Activated CD4-positive, alpha-beta memory T cell treated with anti-CD3 and anti-CD28 coated beads for 36 hours (primary cell): ENCODE measurements at regions of chr12 and their contacts with region 1.

Region 1: DNA sequence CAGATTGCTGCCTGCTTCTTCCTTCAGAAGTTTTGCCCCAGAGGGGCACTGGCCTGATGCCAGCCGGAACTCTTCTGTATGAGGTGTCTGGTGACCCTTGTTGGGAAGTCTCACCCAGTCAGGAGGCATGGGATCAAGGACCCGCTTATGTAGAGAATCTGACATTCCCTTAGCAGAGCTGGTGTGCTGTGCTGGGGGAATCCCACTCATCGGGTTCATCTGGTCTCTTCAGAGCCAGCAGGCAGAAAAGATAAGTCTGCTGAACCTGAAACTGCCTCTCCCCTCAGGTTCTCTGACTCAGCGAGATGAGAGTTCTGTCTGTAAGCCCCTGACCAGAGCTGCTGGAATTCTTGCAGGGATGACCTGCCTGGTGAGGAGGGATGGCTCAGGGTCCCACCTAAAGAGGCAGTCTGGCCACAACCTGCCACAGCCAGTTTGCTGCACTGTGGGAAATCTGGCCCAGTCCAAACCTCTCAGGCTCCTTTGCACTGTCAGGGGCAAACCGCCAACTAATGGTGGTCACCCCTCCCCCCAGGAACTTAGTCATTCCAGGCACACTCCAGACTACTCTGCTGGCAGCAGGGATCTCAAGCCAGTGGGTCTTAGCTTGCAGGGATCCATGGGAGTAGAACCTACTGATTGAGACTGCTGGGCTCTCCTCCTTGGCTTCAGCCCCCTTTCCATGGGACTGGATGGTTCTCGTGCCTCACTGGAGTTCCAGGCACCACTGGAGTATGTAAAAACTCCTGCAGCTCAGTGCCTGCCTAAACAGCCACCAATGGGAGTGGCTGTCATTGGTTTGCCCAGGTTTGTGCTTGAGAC is 4.1 kb downstream of the CLEC2D start:
- DNase-seq: peak; percentile 88
- H3K4me3 Mint-ChIP-seq: peak overlapping the region; percentile 93
- H3K27ac Mint-ChIP-seq: peak overlapping the region; percentile 98
- H3K4me1 Mint-ChIP-seq: peaks cover 41% of the 10 kb centered on the region
- H3K27me3 Mint-ChIP-seq: no peaks in the 10 kb centered on the region

Region 2: DNA sequence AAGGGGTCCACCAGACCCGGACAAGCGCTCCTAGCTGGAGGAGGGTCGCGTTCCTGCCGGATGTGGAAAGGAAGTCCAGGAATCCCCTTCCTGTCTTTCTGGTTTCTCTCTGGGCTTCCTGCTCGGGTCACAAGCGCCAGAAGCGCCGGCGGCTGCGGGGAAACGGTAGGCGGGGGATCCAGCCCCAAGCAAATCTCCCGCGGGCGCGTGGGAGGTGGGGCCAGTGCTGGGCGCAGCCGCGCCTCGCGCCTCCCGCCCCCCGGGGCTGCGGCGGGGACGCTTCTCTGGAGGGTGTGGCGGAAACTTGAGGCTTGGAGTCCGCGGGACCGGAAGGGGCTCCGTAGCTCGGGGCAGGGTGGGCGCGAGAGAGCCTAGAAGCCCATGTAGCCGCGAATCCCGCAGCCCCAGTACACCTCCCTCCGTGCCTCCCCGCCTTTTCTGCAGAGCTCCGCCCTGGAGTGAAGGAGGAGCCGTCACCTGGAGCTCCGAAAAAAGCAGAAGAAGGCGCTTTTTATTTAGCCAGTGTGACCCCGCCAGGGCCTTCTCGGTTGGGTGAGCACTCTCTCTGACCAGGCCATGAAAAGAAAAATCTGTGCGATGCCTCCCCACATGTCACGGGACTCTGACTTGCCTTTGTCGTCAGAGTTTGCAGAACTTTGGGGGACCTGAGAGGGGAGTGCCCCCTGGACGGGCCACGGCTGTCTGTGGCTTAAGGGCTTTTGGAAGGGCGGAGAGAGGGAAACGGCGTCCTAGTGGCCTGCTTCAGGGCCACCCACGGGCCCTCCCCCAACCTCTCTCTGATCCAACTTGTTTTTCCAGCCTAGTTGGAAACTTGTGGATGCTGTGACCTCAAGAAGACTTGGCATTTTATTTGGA is 25.6 kb before region 1 on chr12:
- CTCF ChIA-PET with region 1: interaction called, 13 read pairs
- POLR2A ChIA-PET with region 1: interaction called, 471 read pairs
- intact Hi-C with region 1: loop called (anchors 1 kb)
- DNase-seq: peak; percentile 96
- H3K4me3 Mint-ChIP-seq: peak overlapping the region; percentile 85
- H3K27ac Mint-ChIP-seq: peak overlapping the region; percentile 97
- H3K4me1 Mint-ChIP-seq: peaks cover 53% of the 10 kb centered on the region
- H3K27me3 Mint-ChIP-seq: peaks cover 2% of the 10 kb centered on the region

Region 3: DNA sequence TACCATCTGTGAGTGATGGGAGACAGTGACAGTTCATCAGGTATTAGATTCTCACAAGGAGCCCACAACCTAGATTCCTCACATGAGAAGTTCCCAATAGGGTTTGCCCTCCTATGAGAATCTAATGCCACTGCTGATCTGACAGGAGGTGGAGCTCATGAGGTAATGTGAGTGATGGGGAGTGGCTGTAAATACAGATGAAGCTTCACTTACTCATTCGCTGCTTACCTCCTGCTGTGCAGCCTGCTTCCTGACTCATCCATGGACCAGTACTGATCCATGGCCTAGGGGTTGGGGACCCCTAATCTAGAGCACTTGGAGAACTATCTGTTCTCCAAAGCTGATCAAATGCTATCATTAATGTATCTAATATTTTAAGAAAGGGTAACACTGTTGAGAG is 13.6 kb after region 1 on chr12:
- CTCF ChIA-PET with region 1: interaction called, 3 read pairs
- POLR2A ChIA-PET with region 1: interaction called, 5 read pairs
- intact Hi-C with region 1: loop called (anchors 2 kb)
- DNase-seq: peak; percentile 44
- H3K4me3 Mint-ChIP-seq: no peak overlapping the region
- H3K27ac Mint-ChIP-seq: peak overlapping the region; percentile 51
- H3K4me1 Mint-ChIP-seq: peaks cover 66% of the 10 kb centered on the region
- H3K27me3 Mint-ChIP-seq: no peaks in the 10 kb centered on the region

Region 4: GRCh38 chr12:9707864-9708808 is 34.5 kb after region 1 on chr12:
- CTCF ChIA-PET with region 1: interaction called, 10 read pairs
- POLR2A ChIA-PET with region 1: interaction called, 6 read pairs
- intact Hi-C with region 1: loop called (anchors 2 kb)
- DNase-seq: peak; percentile 81
- H3K4me3 Mint-ChIP-seq: peak overlapping the region; percentile 62
- H3K27ac Mint-ChIP-seq: peak overlapping the region; percentile 85
- H3K4me1 Mint-ChIP-seq: peaks cover 40% of the 10 kb centered on the region
- H3K27me3 Mint-ChIP-seq: no peaks in the 10 kb centered on the region

Region 5: GRCh38 chr12:9760699-9761418 is 87.2 kb after region 1 on chr12 and contains the start of gene CD69:
- CTCF ChIA-PET with region 1: interaction called, 5 read pairs
- POLR2A ChIA-PET with region 1: interaction called, 277 read pairs
- intact Hi-C with region 1: loop called (anchors 1 kb)
- DNase-seq: peak; percentile 90
- H3K4me3 Mint-ChIP-seq: peak within 1 kb of the TSS; percentile 100
- H3K27ac Mint-ChIP-seq: peak within 1 kb of the TSS; percentile 99
- H3K4me1 Mint-ChIP-seq: peaks cover 52% of the 10 kb centered on the region
- H3K27me3 Mint-ChIP-seq: peaks cover 2% of the 10 kb centered on the region
- total RNA-seq, gene CD69: 118 to 120 TPM

Region 6: DNA sequence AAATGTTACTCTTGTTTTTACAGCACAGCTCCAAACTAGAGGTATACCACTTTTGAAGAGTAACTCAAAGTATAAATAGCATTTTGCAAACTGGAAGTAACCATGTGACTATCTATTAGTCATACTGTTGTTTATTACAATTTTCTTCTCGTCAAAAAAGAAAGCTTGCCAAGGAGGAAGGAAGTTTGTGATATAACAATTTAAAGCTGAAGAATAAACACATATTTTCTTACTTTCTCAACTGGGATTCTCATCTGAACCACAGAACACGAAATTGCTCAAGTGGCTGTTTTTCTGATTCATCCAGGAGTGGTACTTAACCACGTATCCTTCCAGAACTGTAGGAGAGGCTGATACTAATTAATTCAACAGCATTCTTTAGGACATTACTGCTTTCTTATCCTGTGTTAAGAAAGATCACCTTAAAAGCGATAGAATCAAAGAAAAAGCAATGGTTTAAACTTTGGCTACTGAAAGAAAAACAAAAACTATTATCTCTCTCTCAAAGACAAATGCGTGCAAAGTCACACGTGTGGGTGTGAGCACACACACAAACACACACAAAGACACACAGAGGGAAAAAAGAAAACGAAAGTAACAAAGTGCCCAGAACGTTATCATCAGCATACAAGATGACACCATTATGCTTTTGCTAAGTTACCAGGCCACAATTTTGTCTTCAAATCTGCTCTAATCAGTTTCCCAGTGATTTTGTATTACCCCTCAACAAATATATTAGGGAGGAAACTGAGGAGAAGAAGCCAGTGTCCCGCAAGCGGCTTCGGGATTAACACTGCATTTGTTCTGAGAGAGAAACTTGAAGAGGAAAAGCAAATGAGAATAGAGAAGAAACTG is 195.9 kb after region 1 on chr12 and contains the start of gene CLEC2B:
- CTCF ChIA-PET with region 1: no interaction called
- POLR2A ChIA-PET with region 1: interaction called, 13 read pairs
- intact Hi-C with region 1: loop called (anchors 2 kb)
- DNase-seq: peak; percentile 41
- H3K4me3 Mint-ChIP-seq: peak within 1 kb of the TSS; percentile 82
- H3K27ac Mint-ChIP-seq: peak within 1 kb of the TSS; percentile 93
- H3K4me1 Mint-ChIP-seq: peaks cover 19% of the 10 kb centered on the region
- H3K27me3 Mint-ChIP-seq: no peaks in the 10 kb centered on the region
- total RNA-seq, gene CLEC2B: 12.6 to 13.7 TPM

Region 7: DNA sequence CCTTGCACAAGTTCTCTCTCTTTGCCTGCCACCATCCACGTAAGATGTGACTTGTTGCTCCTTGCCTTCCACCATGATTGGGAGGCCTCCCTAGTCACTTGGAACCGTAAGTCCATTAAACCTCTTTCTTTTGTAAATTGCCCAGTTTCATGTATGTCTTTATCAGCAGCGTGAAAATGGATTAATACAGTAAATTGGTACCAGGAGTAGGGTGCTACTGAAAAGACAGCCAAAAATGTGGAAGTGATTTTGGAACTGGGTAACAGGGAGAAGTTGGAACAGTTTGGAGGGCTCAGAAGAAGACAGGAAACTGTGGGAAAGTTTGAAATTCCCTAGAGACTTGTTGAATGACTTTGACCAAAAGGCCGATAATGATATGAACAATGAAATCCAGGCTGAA is 972.3 kb after region 1 on chr12:
- CTCF ChIA-PET with region 1: no interaction called
- POLR2A ChIA-PET with region 1: no interaction called
- intact Hi-C with region 1: no loop called
- DNase-seq: no peak
- H3K4me3 Mint-ChIP-seq: no peak overlapping the region
- H3K27ac Mint-ChIP-seq: no peak overlapping the region
- H3K4me1 Mint-ChIP-seq: no peaks in the 10 kb centered on the region
- H3K27me3 Mint-ChIP-seq: peaks cover 18% of the 10 kb centered on the region